Activated CD4-positive, alpha-beta memory T cell treated with anti-CD3 and anti-CD28 coated beads for 36 hours (primary cell): ENCODE measurements at regions of chr9 and their contacts with region 1.

Region 1: GRCh38 chr9:68974431-68974830 is 39.5 kb downstream of the PRKACG start:
- DNase-seq: peak; percentile 56
- H3K4me3 Mint-ChIP-seq: no peak overlapping the region
- H3K27ac Mint-ChIP-seq: peak overlapping the region; percentile 85
- H3K4me1 Mint-ChIP-seq: peaks cover 49% of the 10 kb centered on the region
- H3K27me3 Mint-ChIP-seq: peaks cover 3% of the 10 kb centered on the region

Region 2: GRCh38 chr9:68653141-68653595 is 321.3 kb before region 1 on chr9:
- CTCF ChIA-PET with region 1: no interaction called
- POLR2A ChIA-PET with region 1: interaction called, 3 read pairs
- intact Hi-C with region 1: loop called (anchors 1 kb)
- DNase-seq: peak; percentile 51
- H3K4me3 Mint-ChIP-seq: no peak overlapping the region
- H3K27ac Mint-ChIP-seq: peak overlapping the region; percentile 53
- H3K4me1 Mint-ChIP-seq: peaks cover 28% of the 10 kb centered on the region
- H3K27me3 Mint-ChIP-seq: peaks cover 23% of the 10 kb centered on the region

Region 3: GRCh38 chr9:68779558-68780384 is 194.7 kb before region 1 on chr9:
- CTCF ChIA-PET with region 1: interaction called, 3 read pairs
- POLR2A ChIA-PET with region 1: interaction called, 4 read pairs
- intact Hi-C with region 1: loop called (anchors 1 kb)
- DNase-seq: peak; percentile 95
- H3K4me3 Mint-ChIP-seq: no peak overlapping the region
- H3K27ac Mint-ChIP-seq: no peak overlapping the region
- H3K4me1 Mint-ChIP-seq: peaks cover 5% of the 10 kb centered on the region
- H3K27me3 Mint-ChIP-seq: no peaks in the 10 kb centered on the region

Region 4: GRCh38 chr9:68802525-68803015 is 171.9 kb before region 1 on chr9:
- CTCF ChIA-PET with region 1: no interaction called
- POLR2A ChIA-PET with region 1: no interaction called
- intact Hi-C with region 1: loop called (anchors 1 kb)
- DNase-seq: peak; percentile 71
- H3K4me3 Mint-ChIP-seq: no peak overlapping the region
- H3K27ac Mint-ChIP-seq: no peak overlapping the region
- H3K4me1 Mint-ChIP-seq: no peaks in the 10 kb centered on the region
- H3K27me3 Mint-ChIP-seq: peaks cover 2% of the 10 kb centered on the region

Region 5: DNA sequence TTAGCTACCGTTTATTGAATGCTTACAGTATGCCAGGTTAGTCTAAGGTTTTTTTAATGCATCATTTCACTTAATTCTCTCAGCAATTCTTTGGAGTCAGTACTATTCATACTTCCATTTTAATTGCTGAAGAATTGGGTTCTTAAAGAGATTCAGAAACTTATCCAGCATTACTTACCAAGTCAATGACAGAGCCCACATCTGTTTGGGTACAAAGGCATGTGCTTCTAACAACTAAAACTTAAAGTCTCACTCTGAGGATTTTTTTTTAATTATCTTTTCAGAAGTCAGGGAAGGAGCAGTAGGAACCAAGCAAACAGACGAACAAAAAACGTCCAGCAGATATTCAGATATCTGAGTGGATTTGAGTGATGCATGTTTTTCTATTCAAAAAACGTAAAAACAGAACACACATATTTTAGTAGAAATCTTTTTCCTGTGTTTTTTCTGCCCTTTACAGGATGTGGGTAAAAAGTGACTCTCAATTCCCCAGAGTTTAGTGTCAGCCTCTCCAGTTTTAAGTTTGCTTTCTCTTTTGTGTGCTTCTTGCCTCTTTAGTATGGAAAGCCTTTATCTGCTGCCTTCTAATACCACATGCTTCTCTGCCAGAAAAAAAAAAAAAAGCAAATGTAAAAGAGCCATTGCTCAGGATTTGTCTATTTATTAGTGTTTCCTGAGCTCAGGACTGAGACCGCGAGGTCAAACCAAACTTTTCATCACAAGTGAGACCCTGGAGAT is 78.5 kb before region 1 on chr9:
- CTCF ChIA-PET with region 1: no interaction called
- POLR2A ChIA-PET with region 1: no interaction called
- intact Hi-C with region 1: loop called (anchors 2 kb)
- DNase-seq: no peak
- H3K4me3 Mint-ChIP-seq: peak overlapping the region; percentile 48
- H3K27ac Mint-ChIP-seq: peak overlapping the region; percentile 84
- H3K4me1 Mint-ChIP-seq: peaks cover 31% of the 10 kb centered on the region
- H3K27me3 Mint-ChIP-seq: no peaks in the 10 kb centered on the region

Region 6: GRCh38 chr9:68919661-68920060 is 54.8 kb before region 1 on chr9:
- CTCF ChIA-PET with region 1: no interaction called
- POLR2A ChIA-PET with region 1: interaction called, 5 read pairs
- intact Hi-C with region 1: loop called (anchors 1 kb)
- DNase-seq: no peak
- H3K4me3 Mint-ChIP-seq: no peak overlapping the region
- H3K27ac Mint-ChIP-seq: no peak overlapping the region
- H3K4me1 Mint-ChIP-seq: peaks cover 16% of the 10 kb centered on the region
- H3K27me3 Mint-ChIP-seq: peaks cover 3% of the 10 kb centered on the region

Region 7: GRCh38 chr9:69444021-69444420 is 469.6 kb after region 1 on chr9:
- CTCF ChIA-PET with region 1: no interaction called
- POLR2A ChIA-PET with region 1: no interaction called
- intact Hi-C with region 1: no loop called
- DNase-seq: no peak
- H3K4me3 Mint-ChIP-seq: no peak overlapping the region
- H3K27ac Mint-ChIP-seq: no peak overlapping the region
- H3K4me1 Mint-ChIP-seq: no peaks in the 10 kb centered on the region
- H3K27me3 Mint-ChIP-seq: peaks cover 3% of the 10 kb centered on the region